OCI-LY7 (cell line): ENCODE measurements at regions of chr12 and their contacts with region 1.

Region 1: DNA sequence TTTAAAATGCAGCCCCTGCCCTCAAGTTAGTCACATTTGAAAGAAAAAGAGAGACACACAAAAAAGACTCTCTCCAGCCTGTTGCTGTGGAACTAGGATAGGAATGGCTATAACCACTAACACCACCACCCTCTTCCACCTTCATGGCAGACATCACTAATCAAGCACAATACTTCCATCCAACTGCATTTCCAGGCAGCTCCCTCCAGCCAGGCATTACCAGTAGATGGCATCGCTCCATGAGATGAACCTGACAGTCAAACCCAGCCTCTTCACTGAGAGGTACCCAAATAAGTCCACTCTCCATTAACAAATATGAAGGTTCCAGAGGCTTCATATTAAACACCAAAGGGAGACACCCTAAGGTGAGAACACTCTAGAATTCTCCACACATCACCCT is 24.4 kb downstream of the SLC8B1 start:
- DNase-seq: peak; percentile 33
- H3K4me3 ChIP-seq: no peak overlapping the region
- H3K27ac ChIP-seq: no peak overlapping the region
- H3K4me1 ChIP-seq: peaks cover 21% of the 10 kb centered on the region
- CTCF ChIP-seq: peak; percentile 57

Region 2: DNA sequence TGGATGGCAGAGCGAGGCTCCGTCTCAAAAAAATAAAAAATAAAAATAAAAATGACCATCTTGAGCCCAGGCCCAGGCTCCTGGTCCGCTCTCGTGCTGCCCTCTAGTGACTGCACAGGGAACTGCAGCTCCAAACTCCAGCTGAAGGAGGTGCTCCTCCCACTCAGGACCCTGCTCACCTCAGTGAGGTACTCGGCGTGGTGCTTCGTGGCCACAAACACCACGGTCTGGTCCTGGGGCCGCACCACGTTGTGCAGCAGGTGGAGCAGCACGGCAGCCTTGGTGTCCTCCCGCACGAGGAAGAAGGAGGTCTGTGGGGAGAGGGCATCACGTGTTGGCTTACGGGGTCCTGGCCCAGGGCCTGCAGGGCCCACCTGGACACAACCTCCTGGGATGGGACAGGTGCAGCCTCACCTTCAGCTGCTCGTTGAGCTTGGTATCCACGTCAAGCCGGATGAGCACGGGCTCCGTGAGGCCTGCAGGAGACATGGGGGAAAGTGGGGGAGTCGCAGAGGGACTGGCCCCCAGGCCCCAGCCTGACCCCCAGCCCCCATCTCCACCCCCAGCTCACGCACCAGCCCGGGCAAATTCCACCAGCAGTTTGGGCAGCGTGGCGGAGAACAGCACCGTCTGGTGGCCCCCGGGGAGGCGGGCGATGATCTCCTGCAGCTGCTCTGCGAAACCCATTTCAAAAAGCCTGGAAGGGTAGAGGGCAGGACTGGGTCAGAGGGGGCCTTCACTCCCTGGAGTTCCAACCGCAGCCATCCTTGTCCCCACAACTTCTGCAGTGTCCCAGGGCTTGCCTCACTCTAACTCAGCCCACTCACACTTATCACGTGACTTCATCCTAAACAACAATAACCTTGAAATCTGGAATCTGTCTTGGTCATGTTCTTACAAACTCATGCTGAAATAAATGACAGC is 135.8 kb before region 1 on chr12:
- CTCF ChIA-PET with region 1: no interaction called
- POLR2A ChIA-PET with region 1: no interaction called
- intact Hi-C with region 1: no loop called
- DNase-seq: peak; percentile 84
- H3K4me3 ChIP-seq: peak overlapping the region; percentile 10
- H3K27ac ChIP-seq: peak overlapping the region; percentile 98
- H3K4me1 ChIP-seq: peaks cover 46% of the 10 kb centered on the region
- CTCF ChIP-seq: peak; percentile 94

Region 3: DNA sequence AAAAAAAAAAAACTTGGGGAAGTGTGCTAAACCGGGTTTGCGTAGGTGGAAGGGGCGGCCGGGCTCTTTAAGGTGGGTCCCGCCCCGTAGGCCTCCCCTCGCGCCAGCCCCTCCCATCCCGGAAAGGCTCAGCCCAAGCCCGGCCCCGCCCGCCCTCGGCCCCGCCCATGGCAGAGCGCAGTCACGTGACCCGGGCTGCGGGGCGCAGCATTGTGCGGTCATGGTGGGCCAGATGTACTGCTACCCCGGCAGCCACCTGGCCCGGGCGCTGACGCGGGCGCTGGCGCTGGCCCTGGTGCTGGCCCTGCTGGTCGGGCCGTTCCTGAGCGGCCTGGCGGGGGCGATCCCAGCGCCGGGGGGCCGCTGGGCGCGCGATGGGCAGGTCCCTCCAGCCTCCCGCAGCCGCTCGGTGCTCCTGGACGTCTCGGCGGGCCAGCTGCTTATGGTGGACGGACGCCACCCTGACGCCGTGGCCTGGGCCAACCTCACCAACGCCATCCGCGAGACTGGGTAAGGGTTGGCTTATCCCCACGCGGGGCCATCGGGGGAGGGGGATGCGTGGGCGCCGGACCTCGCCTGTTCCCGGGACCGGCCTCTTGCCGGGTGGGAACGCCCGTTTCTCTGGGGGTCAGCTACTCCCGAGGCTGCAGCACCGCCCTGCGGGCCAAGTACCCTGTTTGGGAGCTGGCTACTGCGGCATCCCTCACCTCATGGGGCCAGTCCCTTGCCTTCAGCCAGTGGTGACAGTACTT is 48.1 kb after region 1 on chr12 and contains the start of gene PLBD2:
- CTCF ChIA-PET with region 1: no interaction called
- POLR2A ChIA-PET with region 1: no interaction called
- intact Hi-C with region 1: loop called (anchors 2 kb)
- DNase-seq: peak; percentile 96
- H3K4me3 ChIP-seq: peak within 1 kb of the TSS; percentile 95
- H3K27ac ChIP-seq: no peak within 1 kb of the TSS
- H3K4me1 ChIP-seq: peaks cover 19% of the 10 kb centered on the region
- CTCF ChIP-seq: no peak
- total RNA-seq, gene PLBD2: 2.3 and 3.4 TPM in 2 replicates

Region 4: GRCh38 chr12:113422030-113422885 is 111.8 kb after region 1 on chr12 and contains the start of gene SDSL:
- CTCF ChIA-PET with region 1: no interaction called
- POLR2A ChIA-PET with region 1: interaction called, 3 read pairs
- intact Hi-C with region 1: loop called (anchors 1 kb)
- DNase-seq: peak; percentile 83
- H3K4me3 ChIP-seq: peak within 1 kb of the TSS; percentile 45
- H3K27ac ChIP-seq: peak within 1 kb of the TSS; percentile 48
- H3K4me1 ChIP-seq: peaks cover 31% of the 10 kb centered on the region
- CTCF ChIP-seq: no peak
- total RNA-seq, gene SDSL: not detected in 2 replicates